H1 (cell line): ENCODE measurements at regions of chr16 and their contacts with region 1.

Region 1: GRCh38 chr16:88442727-88443576 is 10.1 kb upstream of the ZFPM1 start:
- DNase-seq: peak in 1 of 2 experiments; percentile 93
- H3K4me3 ChIP-seq: no peak overlapping the region
- H3K27ac ChIP-seq: no peak overlapping the region
- H3K4me1 ChIP-seq: peaks cover 0 to 11% (median 1%) of the 10 kb centered on the region in 4 experiments; a peak in 3 of 7 replicates
- H3K27me3 ChIP-seq: peaks cover 0 to 3% (median 0%) of the 10 kb centered on the region in 4 experiments; a peak in 1 of 7 replicates
- CTCF ChIP-seq: peak; percentile 93 to 95 (median 95)
- EP300 ChIP-seq: no peak
- POLR2A ChIP-seq: no peak
- RAD21 ChIP-seq: peak; percentile 97

Region 2: GRCh38 chr16:88264611-88265285 is 178.2 kb before region 1 on chr16:
- CTCF ChIA-PET with region 1: no interaction called
- POLR2A ChIA-PET with region 1: no interaction called
- DNase-seq: peak; percentile 19 to 70
- H3K4me3 ChIP-seq: no peak overlapping the region
- H3K27ac ChIP-seq: no peak overlapping the region
- H3K4me1 ChIP-seq: peaks cover 0 to 12% (median 6%) of the 10 kb centered on the region in 4 experiments; a peak in 6 of 7 replicates
- H3K27me3 ChIP-seq: no peaks in the 10 kb centered on the region
- CTCF ChIP-seq: no peak
- EP300 ChIP-seq: no peak
- POLR2A ChIP-seq: no peak
- RAD21 ChIP-seq: no peak

Region 3: DNA sequence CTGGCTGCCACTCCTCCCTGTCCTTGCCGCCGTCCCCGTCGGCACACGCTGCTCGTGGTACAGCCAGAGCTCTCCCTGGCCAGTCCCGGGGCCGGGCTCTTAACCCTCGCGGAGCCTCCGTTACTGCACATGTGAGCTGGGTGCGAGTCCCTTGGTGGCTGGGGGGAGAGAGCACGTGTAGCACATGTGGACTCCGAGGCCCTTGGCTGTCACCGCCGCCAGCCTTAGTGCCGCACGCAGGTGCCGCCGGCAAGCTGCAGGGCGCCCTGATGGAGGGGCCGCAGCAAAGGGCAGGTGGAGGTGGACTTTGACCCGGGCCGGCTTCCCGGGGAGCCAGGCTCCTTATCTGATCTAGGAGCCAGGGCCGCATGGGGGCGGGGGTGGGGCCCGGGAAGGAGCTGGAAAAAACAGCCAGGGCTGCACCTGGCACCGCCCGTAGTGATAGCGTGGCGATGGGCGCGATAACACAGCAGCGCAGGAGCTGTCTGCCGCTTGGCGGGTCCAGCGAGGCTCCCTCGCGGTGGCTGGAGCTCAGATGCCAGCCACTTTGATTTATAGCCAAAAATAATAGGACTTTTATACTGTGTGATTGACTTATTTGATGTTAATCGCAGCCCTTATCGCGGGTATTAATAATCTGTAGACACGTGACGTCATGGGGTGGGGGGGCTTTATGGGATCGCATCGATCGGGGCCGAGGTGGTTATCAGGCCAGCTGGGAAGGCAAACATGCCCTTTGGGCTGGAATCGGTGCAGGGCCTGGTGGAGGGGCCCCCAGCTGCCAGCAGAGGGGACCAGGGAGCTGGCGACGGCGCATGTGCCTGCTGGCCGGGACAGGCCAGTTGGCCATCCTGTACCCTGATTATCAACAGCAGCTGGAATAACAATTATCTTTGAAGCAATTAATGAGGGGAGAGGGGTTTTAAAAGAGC is 45.2 kb after region 1 on chr16:
- CTCF ChIA-PET with region 1: interaction called, 22 read pairs
- POLR2A ChIA-PET with region 1: interaction called, 3 read pairs
- DNase-seq: no peak
- H3K4me3 ChIP-seq: no peak overlapping the region
- H3K27ac ChIP-seq: no peak overlapping the region
- H3K4me1 ChIP-seq: peaks cover 0 to 2% (median 0%) of the 10 kb centered on the region in 4 experiments; a peak in 1 of 7 replicates
- H3K27me3 ChIP-seq: no peaks in the 10 kb centered on the region
- CTCF ChIP-seq: peak; percentile 10 to 36 (median 31); a peak in 3 of 4 replicates
- EP300 ChIP-seq: no peak
- POLR2A ChIP-seq: no peak
- RAD21 ChIP-seq: peak in 1 of 2 experiments; percentile 15; a peak in 2 of 4 replicates

Region 4: DNA sequence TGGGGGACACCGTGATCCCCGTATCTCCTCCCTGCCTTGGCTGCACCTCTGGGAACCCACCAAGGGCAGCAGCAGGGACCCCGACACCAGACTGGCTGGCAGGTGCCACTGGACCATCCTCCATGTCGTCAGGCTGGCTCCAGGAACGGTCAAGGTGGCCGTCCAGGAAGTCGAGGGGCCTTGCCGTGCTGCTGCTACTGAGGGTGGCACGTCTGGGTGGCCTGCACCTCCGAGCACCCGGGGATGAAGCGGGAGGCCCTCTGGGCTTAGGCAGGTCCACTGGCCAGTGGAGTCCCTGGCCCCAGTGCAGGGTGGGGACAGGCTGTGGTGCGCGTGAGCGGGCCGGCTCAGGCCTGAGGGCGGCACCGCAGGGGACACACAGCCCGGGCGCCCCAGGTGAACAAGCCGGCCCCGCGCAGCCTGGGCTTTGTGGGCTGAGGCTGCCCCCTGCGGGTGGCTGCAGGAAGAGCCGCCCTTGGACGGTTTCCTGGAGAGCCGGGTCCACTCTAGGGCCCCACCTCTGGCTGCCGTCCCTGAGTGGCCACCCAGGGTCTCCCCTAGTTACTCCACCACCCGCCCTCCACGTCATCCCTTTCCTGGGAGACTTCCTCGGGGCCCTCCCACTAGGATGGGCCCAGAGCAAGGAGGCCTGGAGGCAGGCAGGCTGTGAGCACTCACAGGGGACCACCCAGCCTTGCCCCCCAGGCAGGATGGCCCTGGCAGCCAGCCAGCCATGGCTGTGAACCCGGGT is 84.4 kb after region 1 on chr16:
- CTCF ChIA-PET with region 1: interaction called, 21 read pairs
- POLR2A ChIA-PET with region 1: no interaction called
- DNase-seq: peak in 1 of 2 experiments; percentile 94
- H3K4me3 ChIP-seq: no peak overlapping the region
- H3K27ac ChIP-seq: no peak overlapping the region
- H3K4me1 ChIP-seq: peaks cover 0 to 15% (median 7%) of the 10 kb centered on the region in 4 experiments; a peak in 5 of 7 replicates
- H3K27me3 ChIP-seq: no peaks in the 10 kb centered on the region
- CTCF ChIP-seq: peak in 2 of 3 experiments; percentile 83 to 94; a peak in 3 of 4 replicates
- EP300 ChIP-seq: no peak
- POLR2A ChIP-seq: no peak; a peak in 1 of 3 replicates
- RAD21 ChIP-seq: peak; percentile 93